ENCODE measurements at regions of chr12 and their contacts with region 1.

Region 1: GRCh38 chr12:114166362-114166761 is 200.2 kb upstream of the RBM19 start:
- DNase-seq: no peak
- H3K4me3 ChIP-seq: no peak overlapping the region
- H3K27me3 ChIP-seq: no peaks in the 10 kb centered on the region
- CTCF ChIP-seq: peak; percentile 63

Region 2: GRCh38 chr12:114152890-114153289 is 13.5 kb before region 1 on chr12:
- CTCF ChIA-PET with region 1: interaction called, 25 read pairs
- POLR2A ChIA-PET with region 1: no interaction called
- DNase-seq: peak; percentile 22
- H3K4me3 ChIP-seq: no peak overlapping the region
- H3K27me3 ChIP-seq: peaks cover 2% of the 10 kb centered on the region; the same call in 1 of the 2 replicates
- CTCF ChIP-seq: no peak

Region 3: GRCh38 chr12:114408886-114409851 is 242.8 kb after region 1 on chr12:
- CTCF ChIA-PET with region 1: interaction called, 11 read pairs
- POLR2A ChIA-PET with region 1: no interaction called
- DNase-seq: no peak
- H3K4me3 ChIP-seq: peak overlapping the region; percentile 90
- H3K27me3 ChIP-seq: no peaks in the 10 kb centered on the region
- CTCF ChIP-seq: no peak

Region 4: DNA sequence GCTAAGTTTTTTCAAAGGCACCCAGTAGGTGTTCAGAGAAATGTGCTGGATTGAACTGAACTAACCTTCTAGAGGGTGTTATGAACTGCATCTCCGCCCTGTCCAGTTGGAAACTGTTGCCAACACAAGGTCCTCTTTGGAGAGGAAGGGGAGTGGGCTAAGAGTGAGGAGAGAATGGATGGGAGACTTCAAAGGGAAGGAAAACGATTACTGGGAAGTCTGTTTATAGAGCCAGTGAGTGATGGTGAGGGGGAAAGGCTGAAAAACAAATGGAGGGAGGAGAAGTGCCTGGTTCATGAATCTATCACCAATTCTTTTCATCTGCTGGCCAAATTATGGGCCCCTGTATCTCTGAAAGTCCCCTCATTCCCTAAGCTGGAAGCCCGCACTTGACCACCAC is 325.6 kb after region 1 on chr12:
- CTCF ChIA-PET with region 1: no interaction called
- POLR2A ChIA-PET with region 1: no interaction called
- DNase-seq: no peak
- H3K4me3 ChIP-seq: no peak overlapping the region
- H3K27me3 ChIP-seq: peaks cover 9% of the 10 kb centered on the region
- CTCF ChIP-seq: no peak

Region 5: DNA sequence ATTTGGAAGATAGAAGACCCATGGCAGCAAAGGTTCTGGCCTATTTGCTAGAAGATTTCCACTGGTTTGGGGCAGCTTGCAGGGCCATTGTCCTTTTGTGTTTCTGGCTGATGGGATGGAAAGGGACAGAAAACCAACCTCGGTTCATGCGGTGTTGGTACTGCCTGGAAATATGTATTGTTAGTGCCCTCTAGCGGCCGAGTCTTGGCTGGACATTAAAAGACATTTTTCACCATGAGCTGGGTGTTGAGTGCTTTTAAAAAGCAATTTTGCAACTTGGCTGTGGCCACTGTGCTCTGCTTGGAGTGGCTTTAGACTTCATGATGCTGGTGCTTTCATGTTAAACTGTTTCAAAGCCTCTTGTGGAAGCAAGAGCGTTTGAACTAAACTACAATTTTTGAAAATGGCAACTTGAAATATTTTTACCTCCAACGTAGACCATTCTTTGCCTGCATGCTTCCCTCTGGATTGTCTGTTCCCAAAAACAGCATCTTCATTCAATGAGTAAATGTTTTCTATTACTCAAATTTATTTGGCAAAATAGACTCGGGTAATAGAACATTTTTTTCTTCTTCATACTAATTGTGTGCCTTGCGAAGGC is 342.3 kb after region 1 on chr12:
- CTCF ChIA-PET with region 1: interaction called, 33 read pairs
- POLR2A ChIA-PET with region 1: no interaction called
- DNase-seq: peak; percentile 24
- H3K4me3 ChIP-seq: no peak overlapping the region
- H3K27me3 ChIP-seq: no peaks in the 10 kb centered on the region
- CTCF ChIP-seq: peak; percentile 76

Measured in BJ (cell line).